IMR-90 (cell line): ENCODE measurements at regions of chr11 and their contacts with region 1.

Region 1: DNA sequence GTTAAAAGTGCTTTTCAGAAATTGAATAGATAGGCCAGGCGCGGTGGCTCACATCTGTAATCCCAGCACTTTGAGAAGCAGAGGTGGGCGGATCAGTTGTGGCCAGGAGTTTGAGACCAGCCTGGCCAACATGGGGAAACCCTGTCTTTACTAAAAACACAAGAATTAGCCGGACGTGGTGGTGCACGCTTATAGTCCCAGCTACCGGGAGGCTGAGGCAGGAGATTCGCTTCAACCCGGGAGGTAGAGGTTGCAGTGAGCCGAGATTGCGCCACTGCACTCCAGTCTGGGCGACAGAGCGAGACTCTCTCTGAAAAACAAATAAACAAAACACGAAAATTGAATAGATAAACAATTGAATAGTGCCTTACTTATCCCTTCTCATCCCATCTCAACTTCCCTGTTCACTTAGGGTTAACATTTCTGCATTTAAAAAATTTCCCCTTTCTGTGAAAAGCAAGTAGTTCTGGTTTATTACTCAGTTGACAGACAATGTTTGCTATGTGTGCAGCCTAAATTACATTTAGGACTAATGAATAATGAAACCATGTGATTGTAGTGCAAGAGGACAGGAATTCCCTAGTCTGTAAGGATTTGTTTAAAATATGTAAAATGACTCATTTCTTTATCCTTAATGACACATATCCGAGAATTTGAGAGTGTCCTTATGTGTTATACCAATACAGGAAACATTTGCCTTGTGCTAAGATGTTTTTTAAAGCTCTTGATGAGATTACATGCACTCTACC is 6.0 kb downstream of the RNF169 start:
- DNase-seq: peak; percentile 96
- ATAC-seq: peak; percentile 82
- H3K4me3 ChIP-seq: peak overlapping the region; percentile 6; the same call in 1 of the 2 replicates
- H3K27ac ChIP-seq: peak overlapping the region; percentile 72
- H3K4me1 ChIP-seq: peaks cover 13% of the 10 kb centered on the region
- H3K27me3 ChIP-seq: no peaks in the 10 kb centered on the region
- CTCF ChIP-seq: no peak
- POLR2A ChIP-seq: no peak
- RAD21 ChIP-seq: no peak

Region 2: DNA sequence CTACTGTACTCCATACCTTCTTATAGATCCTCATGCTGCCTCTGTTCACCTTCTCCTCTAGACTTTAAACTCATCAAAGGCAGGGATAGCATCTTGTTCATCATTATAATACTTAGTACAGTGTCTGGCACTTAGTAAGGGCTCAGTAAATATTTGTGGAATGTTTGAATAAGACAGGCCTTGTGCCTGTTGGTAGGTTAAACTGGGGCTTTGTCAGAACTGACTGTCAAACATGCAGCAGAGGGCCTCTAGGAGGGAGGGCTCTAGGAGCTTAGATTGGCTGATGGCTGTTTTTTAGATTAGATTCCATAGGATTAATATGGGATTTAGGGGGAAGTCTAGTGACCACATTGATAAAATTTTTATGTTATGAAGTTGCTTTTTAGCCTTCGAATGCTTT is 64.7 kb after region 1 on chr11:
- CTCF ChIA-PET with region 1: no interaction called
- POLR2A ChIA-PET with region 1: no interaction called
- dilution Hi-C with region 1: no loop called
- in situ Hi-C with region 1: no loop called
- intact Hi-C with region 1: loop called (anchors 5 kb)
- DNase-seq: peak; percentile 55
- ATAC-seq: peak; percentile 55
- H3K4me3 ChIP-seq: no peak overlapping the region
- H3K27ac ChIP-seq: peak overlapping the region; percentile 59; the same call in 1 of the 2 replicates
- H3K4me1 ChIP-seq: peaks cover 19% of the 10 kb centered on the region
- H3K27me3 ChIP-seq: no peaks in the 10 kb centered on the region
- CTCF ChIP-seq: no peak
- POLR2A ChIP-seq: no peak
- RAD21 ChIP-seq: no peak